Common myeloid progenitor, CD34-positive (primary cell): ENCODE measurements at regions of chr20 and their contacts with region 1.

Region 1: DNA sequence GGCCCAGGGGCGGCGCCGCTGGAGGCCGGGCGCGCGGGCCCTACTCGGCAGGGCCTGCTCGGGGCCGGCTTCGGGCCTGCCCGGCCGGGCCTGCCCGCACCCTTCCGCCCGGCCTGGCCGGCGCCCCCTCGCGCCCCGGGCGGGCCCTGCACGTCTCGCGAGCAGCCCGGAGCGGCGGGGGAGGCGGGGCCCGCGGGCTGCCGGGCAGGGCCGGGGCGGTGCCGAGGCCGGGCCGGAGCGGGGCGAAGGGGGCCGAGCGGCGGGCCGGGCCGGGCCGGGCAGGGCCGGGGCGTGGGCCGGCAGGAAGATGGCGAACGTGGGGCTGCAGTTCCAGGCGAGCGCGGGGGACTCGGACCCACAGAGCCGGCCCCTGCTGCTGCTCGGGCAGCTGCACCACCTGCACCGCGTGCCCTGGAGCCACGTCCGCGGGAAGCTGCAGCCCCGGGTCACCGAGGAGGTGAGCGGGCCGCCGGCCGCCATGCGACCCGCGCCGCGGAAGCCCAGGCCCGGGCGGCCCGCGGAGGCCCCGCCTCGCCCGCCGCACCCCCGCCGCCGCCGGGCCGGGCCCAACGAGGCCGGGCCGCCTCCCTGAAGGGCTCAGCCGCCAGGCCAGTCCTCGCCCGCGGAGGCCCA is at the start of gene NPEPL1:
- DNase-seq: peak; percentile 70 to 83 (median 75)
- H3K4me3 ChIP-seq: peak within 1 kb of the TSS; percentile 20 to 70 (median 52)
- H3K27ac ChIP-seq: peak within 1 kb of the TSS in 1 of 2 experiments; percentile 54
- H3K4me1 ChIP-seq: peaks cover 0 to 19% (median 16%) of the 10 kb centered on the region in 4 experiments
- H3K27me3 ChIP-seq: no peaks in the 10 kb centered on the region

Region 2: DNA sequence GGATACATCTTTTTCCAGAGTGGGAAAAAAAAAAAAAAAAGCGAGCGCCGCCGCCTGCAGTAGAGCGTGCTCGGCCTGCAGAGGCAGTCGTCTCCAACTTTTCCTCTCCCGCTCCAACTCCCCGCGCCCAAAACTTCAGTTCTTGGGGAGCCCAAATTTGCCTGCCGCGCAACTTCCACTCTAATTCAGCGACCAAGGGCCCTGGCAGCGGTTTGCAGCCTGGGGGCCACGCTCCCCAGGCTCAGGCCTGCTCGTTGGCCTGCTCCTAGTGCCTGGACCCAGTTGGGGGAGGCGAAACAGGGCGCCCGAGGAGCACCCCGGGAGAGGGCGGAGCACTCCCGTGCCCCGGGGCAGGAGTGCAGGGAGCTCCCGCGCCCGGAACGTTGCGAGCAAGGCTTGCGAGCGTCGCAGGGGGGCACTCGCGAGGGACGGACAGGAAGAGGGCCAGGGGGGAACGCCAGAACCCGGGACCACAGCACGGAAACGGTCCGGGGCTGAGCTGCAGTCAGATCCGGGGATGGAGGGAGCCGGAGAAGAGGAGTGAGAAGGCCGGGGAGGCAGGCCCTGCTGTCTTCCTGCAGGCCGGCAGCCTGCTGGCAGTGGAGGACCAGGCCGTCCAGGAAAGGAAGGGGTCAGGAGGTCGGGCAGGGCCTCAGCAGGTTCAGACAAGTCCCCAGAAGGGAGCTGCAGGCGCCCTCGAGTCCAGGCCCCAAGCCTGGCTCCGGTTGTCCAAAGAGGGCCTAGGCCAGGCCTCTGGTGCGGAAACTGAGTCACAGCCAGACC is 41.7 kb before region 1 on chr20 and contains the start of gene STX16:
- CTCF ChIA-PET with region 1: interaction called, 13 read pairs
- POLR2A ChIA-PET with region 1: no interaction called
- DNase-seq: peak; percentile 90 to 94 (median 92)
- H3K4me3 ChIP-seq: peak within 1 kb of the TSS; percentile 87 to 100 (median 97)
- H3K27ac ChIP-seq: peak within 1 kb of the TSS; percentile 86 to 95
- H3K4me1 ChIP-seq: peaks cover 7 to 33% (median 22%) of the 10 kb centered on the region in 4 experiments
- H3K27me3 ChIP-seq: peaks cover 0 to 5% (median 0%) of the 10 kb centered on the region in 5 experiments